Tibial artery (tissue), 4 donors: ENCODE measurements at regions of chr4 and their contacts with region 1.

Region 1: GRCh38 chr4:118974758-118975157 is 86.1 kb downstream of the SYNPO2 start:
- DNase-seq: no peak
- H3K4me3 ChIP-seq: no peak overlapping the region
- H3K27ac ChIP-seq: peak overlapping the region; percentile 65 to 87
- H3K4me1 ChIP-seq: peaks cover 0 to 93% (median 42%) of the 10 kb centered on the region in 4 donors
- H3K27me3 ChIP-seq: no peaks in the 10 kb centered on the region
- CTCF ChIP-seq: no peak

Region 2: DNA sequence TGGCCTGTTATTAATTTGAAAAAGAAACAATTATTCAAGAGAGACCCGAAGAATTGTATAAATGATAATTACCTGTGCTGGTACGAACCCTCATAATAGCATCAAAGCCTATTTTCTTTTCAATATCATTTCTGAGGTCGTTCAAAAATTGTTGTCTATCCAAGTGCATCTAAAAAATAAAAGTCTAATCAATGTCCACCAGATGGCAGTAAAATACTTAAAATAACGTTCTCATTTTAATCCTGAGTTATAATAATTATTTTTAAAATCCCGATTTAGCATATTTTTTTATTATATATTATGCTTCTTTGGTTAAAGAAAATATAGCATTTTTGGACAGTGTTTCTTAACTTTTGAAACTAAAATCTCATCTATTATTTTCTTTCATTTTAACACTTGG is 233.9 kb before region 1 on chr4:
- intact Hi-C with region 1: loop called (anchors 5 kb)
- DNase-seq: no peak
- H3K4me3 ChIP-seq: peak overlapping the region; percentile 11 to 12
- H3K27ac ChIP-seq: peak overlapping the region; percentile 36 to 51
- H3K4me1 ChIP-seq: peaks cover 0 to 36% (median 12%) of the 10 kb centered on the region in 4 donors
- H3K27me3 ChIP-seq: no peaks in the 10 kb centered on the region
- CTCF ChIP-seq: peak; percentile 34 to 52

Region 3: GRCh38 chr4:119212234-119212963 is 237.6 kb after region 1 on chr4 and contains the start of gene USP53:
- intact Hi-C with region 1: loop called (anchors 5 kb)
- DNase-seq: peak; percentile 98 to 100
- H3K4me3 ChIP-seq: peak within 1 kb of the TSS; percentile 81 to 89
- H3K27ac ChIP-seq: peak within 1 kb of the TSS; percentile 97 to 98
- H3K4me1 ChIP-seq: peaks cover 0 to 26% (median 0%) of the 10 kb centered on the region in 4 donors
- H3K27me3 ChIP-seq: no peaks in the 10 kb centered on the region
- CTCF ChIP-seq: no peak